Activated naive CD4-positive, alpha-beta T cell treated with anti-CD3 and anti-CD28 coated beads for 36 hours (primary cell): ENCODE measurements at regions of chr4 and their contacts with region 1.

Region 1: DNA sequence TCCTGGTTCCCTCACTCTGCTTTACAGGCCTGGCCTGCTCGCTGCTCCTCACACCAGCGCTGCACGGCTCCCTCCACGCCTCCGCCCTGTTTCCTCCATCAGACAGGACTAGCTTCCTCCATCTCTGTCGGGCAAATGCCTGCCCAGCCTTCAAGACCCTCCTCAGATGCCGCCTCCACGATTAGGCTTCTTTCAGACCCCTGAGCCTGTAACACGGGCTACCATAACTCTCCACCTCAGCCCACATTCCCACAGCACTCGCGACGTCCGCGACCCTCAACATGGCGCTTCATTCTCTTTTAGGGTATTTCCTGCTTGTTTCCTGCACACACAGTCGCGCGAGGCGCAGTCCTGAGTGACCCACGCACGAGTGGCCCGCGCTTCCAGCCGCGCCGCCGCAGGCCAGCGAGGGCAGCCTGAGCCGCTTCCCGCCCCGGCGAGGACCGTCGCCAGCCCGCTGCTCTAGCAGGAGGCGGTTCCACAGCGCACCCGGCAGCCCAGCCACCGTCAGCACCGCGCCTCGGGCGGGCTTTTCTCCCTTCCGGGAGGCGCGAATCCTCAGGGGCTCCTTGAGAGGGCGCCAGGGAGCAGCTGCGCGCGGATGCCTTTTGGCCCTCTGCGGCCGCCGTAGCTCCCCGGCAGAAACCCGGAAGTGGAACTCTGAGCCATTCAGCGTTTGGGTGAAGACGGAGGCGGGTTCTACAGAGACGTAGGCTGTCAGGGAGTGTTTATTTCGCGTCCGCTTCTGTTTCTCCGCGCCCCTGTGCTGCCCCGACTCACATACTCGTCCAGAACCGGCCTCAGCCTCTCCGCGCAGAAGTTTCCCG is at the start of gene FRG1:
- DNase-seq: peak; percentile 95
- H3K4me3 Mint-ChIP-seq: peak within 1 kb of the TSS; percentile 91
- H3K27ac Mint-ChIP-seq: peak within 1 kb of the TSS; percentile 90
- H3K4me1 Mint-ChIP-seq: peaks cover 44% of the 10 kb centered on the region
- H3K27me3 Mint-ChIP-seq: no peaks in the 10 kb centered on the region
- total RNA-seq, gene FRG1: 47.7 to 51.9 TPM

Region 2: GRCh38 chr4:189917161-189917891 is 23.1 kb before region 1 on chr4:
- CTCF ChIA-PET with region 1: no interaction called
- intact Hi-C with region 1: no loop called
- DNase-seq: no peak
- H3K4me3 Mint-ChIP-seq: no peak overlapping the region
- H3K27ac Mint-ChIP-seq: no peak overlapping the region
- H3K4me1 Mint-ChIP-seq: no peaks in the 10 kb centered on the region
- H3K27me3 Mint-ChIP-seq: no peaks in the 10 kb centered on the region

Region 3: GRCh38 chr4:190014771-190015537 is 74.6 kb after region 1 on chr4:
- CTCF ChIA-PET with region 1: no interaction called
- intact Hi-C with region 1: loop called (anchors 5 kb)
- DNase-seq: no peak
- H3K4me3 Mint-ChIP-seq: no peak overlapping the region
- H3K27ac Mint-ChIP-seq: no peak overlapping the region
- H3K4me1 Mint-ChIP-seq: peaks cover 35% of the 10 kb centered on the region
- H3K27me3 Mint-ChIP-seq: peaks cover 64% of the 10 kb centered on the region